Caco-2 (cell line): ENCODE measurements at regions of chr11 and their contacts with region 1.

Region 1: GRCh38 chr11:93543292-93543977 is at the start of gene SMCO4:
- DNase-seq: peak; percentile 92 to 97
- H3K4me3 ChIP-seq: peak within 1 kb of the TSS; percentile 84
- H3K4me3 Mint-ChIP-seq: peak within 1 kb of the TSS; percentile 89
- H3K27ac Mint-ChIP-seq: peak within 1 kb of the TSS; percentile 63
- H3K4me1 ChIP-seq: peaks cover 9% of the 10 kb centered on the region
- H3K4me1 Mint-ChIP-seq: peaks cover 13% of the 10 kb centered on the region
- H3K27me3 ChIP-seq: no peaks in the 10 kb centered on the region
- H3K27me3 Mint-ChIP-seq: peaks cover 5% of the 10 kb centered on the region
- CTCF ChIP-seq: peak; percentile 92 to 94
- total RNA-seq, gene SMCO4: 45.6 and 46.3 TPM in 2 replicates

Region 2: DNA sequence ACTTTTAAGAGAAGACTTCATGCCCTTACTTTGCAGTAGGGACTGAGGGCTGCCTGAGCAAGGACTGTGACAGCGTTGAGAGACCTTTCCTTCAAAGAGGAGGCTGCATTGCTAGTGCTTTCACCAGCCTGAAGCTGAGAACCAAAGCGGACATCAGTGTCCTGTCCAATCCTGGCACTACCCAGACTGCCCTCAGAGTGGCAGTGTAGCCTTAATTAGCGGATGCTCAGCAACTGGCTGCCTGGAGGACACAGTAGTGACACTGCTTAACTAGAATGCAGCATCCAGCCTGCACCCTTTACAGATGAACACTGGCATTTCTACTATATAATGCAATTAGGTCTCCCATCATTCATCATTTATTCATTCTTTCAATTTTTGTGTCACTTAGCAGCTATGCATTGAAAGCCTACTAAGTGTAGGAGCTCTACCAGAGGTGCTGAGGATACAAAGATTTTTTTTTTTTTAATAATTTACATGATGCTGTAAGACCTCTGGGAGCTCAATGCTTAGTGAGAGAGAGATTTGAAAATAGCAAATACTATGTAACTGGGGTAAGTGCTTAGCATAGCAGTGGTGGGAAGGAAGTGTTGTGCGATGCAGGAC is 308.7 kb before region 1 on chr11:
- CTCF ChIA-PET with region 1: interaction called, 11 read pairs
- POLR2A ChIA-PET with region 1: no interaction called
- intact Hi-C with region 1: loop called (anchors 1 kb)
- DNase-seq: peak; percentile 84 to 88
- H3K4me3 ChIP-seq: no peak overlapping the region
- H3K4me3 Mint-ChIP-seq: no peak overlapping the region
- H3K27ac Mint-ChIP-seq: no peak overlapping the region
- H3K4me1 ChIP-seq: no peaks in the 10 kb centered on the region
- H3K4me1 Mint-ChIP-seq: peaks cover under 1% of the 10 kb centered on the region
- H3K27me3 ChIP-seq: peaks cover 6% of the 10 kb centered on the region; the same call in 1 of the 2 replicates
- H3K27me3 Mint-ChIP-seq: peaks cover 7% of the 10 kb centered on the region
- CTCF ChIP-seq: peak; percentile 97

Region 3: DNA sequence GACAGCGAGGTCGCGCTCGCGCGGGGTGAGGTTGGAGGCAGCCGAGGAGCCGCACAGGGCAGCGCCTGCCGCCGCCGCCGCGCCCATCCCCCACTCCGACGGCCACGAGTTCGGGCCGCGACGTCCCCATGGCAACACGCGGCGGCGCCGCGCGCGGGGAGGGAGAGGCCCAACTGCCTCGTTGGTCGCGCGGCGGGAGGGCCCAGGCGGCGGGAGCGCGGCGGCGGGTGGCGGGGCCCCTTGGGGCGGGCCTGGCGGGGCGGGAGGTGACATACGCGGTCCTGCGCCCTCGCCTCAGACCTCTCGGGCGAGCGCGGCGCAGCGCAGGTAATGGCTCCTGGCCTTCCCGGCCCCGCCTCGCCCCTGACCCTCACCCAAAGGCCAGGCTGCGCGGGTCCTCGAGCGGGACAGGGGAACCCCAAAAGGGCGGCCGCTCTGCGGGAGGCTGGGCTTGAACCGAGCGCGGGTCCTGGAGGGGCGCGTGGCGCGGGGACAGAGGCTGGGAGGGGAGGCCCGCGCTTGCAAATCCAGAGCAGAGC is 212.9 kb before region 1 on chr11 and contains the start of gene DEUP1:
- CTCF ChIA-PET with region 1: no interaction called
- POLR2A ChIA-PET with region 1: no interaction called
- intact Hi-C with region 1: loop called (anchors 5 kb)
- DNase-seq: peak; percentile 52 to 71
- H3K4me3 ChIP-seq: peak within 1 kb of the TSS; percentile 38
- H3K4me3 Mint-ChIP-seq: peak within 1 kb of the TSS; percentile 80
- H3K27ac Mint-ChIP-seq: no peak within 1 kb of the TSS
- H3K4me1 ChIP-seq: no peaks in the 10 kb centered on the region
- H3K4me1 Mint-ChIP-seq: no peaks in the 10 kb centered on the region
- H3K27me3 ChIP-seq: no peaks in the 10 kb centered on the region; the same call in none of the 2 replicates
- H3K27me3 Mint-ChIP-seq: peaks cover 25% of the 10 kb centered on the region
- CTCF ChIP-seq: no peak
- total RNA-seq, gene DEUP1: 0.25 and 0.60 TPM in 2 replicates

Region 4: DNA sequence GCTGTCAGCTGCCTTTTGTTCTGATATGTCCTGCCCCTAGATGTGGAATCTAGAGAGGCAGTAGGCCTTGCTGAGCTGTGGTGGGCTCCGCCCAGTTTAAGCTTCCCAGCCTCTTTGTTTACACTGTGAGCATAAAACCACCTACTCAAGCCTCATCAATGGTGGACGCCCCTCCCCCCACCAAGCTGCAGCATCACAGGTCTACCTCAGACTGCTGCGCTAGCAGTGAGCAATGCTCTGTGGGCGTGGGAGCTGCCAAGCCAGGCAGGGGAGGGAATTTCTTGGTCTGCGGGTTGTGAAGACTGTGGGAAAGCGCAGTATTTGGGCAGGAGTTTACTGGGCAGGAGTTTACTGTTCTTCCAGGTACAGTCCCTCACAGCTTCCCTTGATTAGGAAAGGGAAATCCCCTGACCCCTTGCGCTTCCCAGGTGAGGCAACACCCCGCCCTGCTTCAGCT is 98.8 kb before region 1 on chr11:
- CTCF ChIA-PET with region 1: no interaction called
- POLR2A ChIA-PET with region 1: no interaction called
- intact Hi-C with region 1: loop called (anchors 5 kb)
- DNase-seq: peak; percentile 55 to 73
- H3K4me3 ChIP-seq: no peak overlapping the region
- H3K4me3 Mint-ChIP-seq: no peak overlapping the region
- H3K27ac Mint-ChIP-seq: no peak overlapping the region
- H3K4me1 ChIP-seq: no peaks in the 10 kb centered on the region
- H3K4me1 Mint-ChIP-seq: no peaks in the 10 kb centered on the region
- H3K27me3 ChIP-seq: no peaks in the 10 kb centered on the region; the same call in 1 of the 2 replicates
- H3K27me3 Mint-ChIP-seq: peaks cover 13% of the 10 kb centered on the region
- CTCF ChIP-seq: no peak

Region 5: GRCh38 chr11:93512073-93512475 is 31.4 kb before region 1 on chr11:
- CTCF ChIA-PET with region 1: no interaction called
- POLR2A ChIA-PET with region 1: no interaction called
- intact Hi-C with region 1: no loop called
- DNase-seq: no peak
- H3K4me3 ChIP-seq: no peak overlapping the region
- H3K4me3 Mint-ChIP-seq: no peak overlapping the region
- H3K27ac Mint-ChIP-seq: no peak overlapping the region
- H3K4me1 ChIP-seq: no peaks in the 10 kb centered on the region
- H3K4me1 Mint-ChIP-seq: no peaks in the 10 kb centered on the region
- H3K27me3 ChIP-seq: no peaks in the 10 kb centered on the region
- H3K27me3 Mint-ChIP-seq: no peaks in the 10 kb centered on the region
- CTCF ChIP-seq: no peak

Region 6: GRCh38 chr11:93652161-93652597 is 108.7 kb after region 1 on chr11:
- CTCF ChIA-PET with region 1: interaction called, 3 read pairs
- POLR2A ChIA-PET with region 1: no interaction called
- intact Hi-C with region 1: loop called (anchors 1 kb)
- DNase-seq: peak in 1 of 2 experiments; percentile 84
- H3K4me3 ChIP-seq: no peak overlapping the region
- H3K4me3 Mint-ChIP-seq: no peak overlapping the region
- H3K27ac Mint-ChIP-seq: no peak overlapping the region
- H3K4me1 ChIP-seq: peaks cover 13% of the 10 kb centered on the region
- H3K4me1 Mint-ChIP-seq: peaks cover 24% of the 10 kb centered on the region
- H3K27me3 ChIP-seq: no peaks in the 10 kb centered on the region; the same call in 1 of the 2 replicates
- H3K27me3 Mint-ChIP-seq: peaks cover 16% of the 10 kb centered on the region
- CTCF ChIP-seq: peak; percentile 83